Mammary epithelial cell (primary cell): ENCODE measurements at regions of chr7 and their contacts with region 1.

Region 1: DNA sequence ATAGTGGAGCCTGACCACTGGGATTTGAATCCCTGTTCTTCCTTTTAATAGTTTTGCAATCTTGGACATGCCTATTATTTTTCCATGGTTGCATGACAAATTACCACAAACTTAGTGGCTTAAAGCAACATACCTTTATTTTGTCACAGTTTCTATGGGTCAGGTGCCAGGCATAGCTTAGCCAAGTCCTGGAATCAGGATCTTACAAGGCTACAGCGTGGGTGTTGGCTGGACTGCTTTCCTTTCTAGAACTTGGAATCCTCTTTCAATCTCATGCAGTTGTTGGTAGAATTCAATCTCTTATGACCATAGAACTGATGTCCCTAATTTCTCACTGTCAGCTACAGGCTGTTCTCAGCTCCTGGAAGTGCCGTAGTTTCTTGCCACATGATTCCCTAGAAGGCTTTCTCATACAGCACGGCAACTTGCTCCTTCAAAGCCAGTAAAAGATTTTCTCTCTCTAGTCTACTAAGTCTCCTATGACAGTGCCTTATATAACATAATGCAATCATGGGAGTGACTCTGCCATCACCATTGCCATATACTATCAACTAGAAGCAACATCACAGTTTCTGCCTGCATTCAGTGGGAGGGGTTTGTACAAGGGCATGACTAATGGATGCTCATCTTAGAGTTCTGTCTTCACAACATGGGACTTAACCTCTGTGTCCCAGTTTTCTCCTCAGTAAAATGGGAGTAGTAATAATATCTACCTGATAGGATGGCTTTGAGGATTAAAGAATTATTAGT is 243.4 kb upstream of the FZD1 start:
- DNase-seq: peak; percentile 67
- H3K4me3 ChIP-seq: no peak overlapping the region
- H3K27ac ChIP-seq: no peak overlapping the region
- H3K4me1 ChIP-seq: peaks cover 9% of the 10 kb centered on the region
- H3K27me3 ChIP-seq: no peaks in the 10 kb centered on the region
- CTCF ChIP-seq: no peak

Region 2: DNA sequence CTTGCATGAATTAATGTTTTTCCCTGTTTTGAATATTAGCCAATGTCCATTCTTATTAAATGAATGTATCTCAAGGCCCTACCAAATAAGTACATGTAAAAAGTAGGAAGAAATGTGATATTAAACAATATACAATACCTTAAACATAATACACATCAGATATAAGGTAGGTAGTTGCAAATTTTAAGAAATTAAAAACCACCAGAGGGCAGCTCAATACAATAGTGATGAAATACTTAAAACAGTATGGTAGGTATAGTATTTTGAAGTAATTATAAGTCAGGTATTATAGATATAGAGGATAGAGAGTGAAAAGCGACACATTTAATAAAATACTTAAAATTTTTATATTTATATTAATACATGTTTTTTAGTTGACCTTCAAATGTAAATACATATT is 468.3 kb before region 1 on chr7:
- CTCF ChIA-PET with region 1: no interaction called
- dilution Hi-C with region 1: no loop called
- in situ Hi-C with region 1: loop called in 1 of 2 experiments (anchors 10 kb)
- intact Hi-C with region 1: no loop called
- DNase-seq: peak; percentile 10
- H3K4me3 ChIP-seq: no peak overlapping the region
- H3K27ac ChIP-seq: no peak overlapping the region
- H3K4me1 ChIP-seq: no peaks in the 10 kb centered on the region
- H3K27me3 ChIP-seq: no peaks in the 10 kb centered on the region
- CTCF ChIP-seq: peak; percentile 20 to 43

Region 3: DNA sequence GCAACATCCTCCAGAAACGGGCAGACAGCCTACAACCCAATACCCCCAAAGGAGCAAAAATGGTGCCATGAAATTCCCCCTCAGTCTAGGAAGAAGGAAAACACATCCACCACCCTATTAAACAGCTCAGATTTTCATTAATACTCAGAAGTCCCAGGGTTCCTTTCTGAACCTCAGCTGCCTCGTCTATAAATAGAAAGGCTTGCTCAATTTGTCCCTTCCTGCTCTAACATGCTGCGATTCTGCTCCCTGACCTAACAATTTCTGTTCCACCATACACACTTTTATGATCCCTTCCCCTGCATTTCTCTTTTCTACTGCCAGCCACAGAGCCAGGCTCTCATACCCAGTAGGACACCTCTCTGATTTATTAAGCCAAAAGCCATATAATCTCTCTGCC is 791.6 kb after region 1 on chr7:
- CTCF ChIA-PET with region 1: no interaction called
- dilution Hi-C with region 1: no loop called
- in situ Hi-C with region 1: no loop called
- intact Hi-C with region 1: no loop called
- DNase-seq: no peak
- H3K4me3 ChIP-seq: no peak overlapping the region
- H3K27ac ChIP-seq: no peak overlapping the region
- H3K4me1 ChIP-seq: no peaks in the 10 kb centered on the region
- H3K27me3 ChIP-seq: no peaks in the 10 kb centered on the region
- CTCF ChIP-seq: no peak